Caco-2 (cell line): ENCODE measurements at regions of chr20 and their contacts with region 1.

Region 1: GRCh38 chr20:32582659-32583580 is 2.2 kb downstream of the NOL4L start:
- DNase-seq: peak; percentile 70 to 73
- H3K4me3 ChIP-seq: peak overlapping the region; percentile 70
- H3K4me3 Mint-ChIP-seq: peak overlapping the region; percentile 54
- H3K27ac Mint-ChIP-seq: no peak overlapping the region
- H3K4me1 ChIP-seq: peaks cover 34% of the 10 kb centered on the region
- H3K4me1 Mint-ChIP-seq: peaks cover 18% of the 10 kb centered on the region
- H3K27me3 ChIP-seq: peaks cover 10% of the 10 kb centered on the region
- H3K27me3 Mint-ChIP-seq: peaks cover 24% of the 10 kb centered on the region
- CTCF ChIP-seq: no peak

Region 2: DNA sequence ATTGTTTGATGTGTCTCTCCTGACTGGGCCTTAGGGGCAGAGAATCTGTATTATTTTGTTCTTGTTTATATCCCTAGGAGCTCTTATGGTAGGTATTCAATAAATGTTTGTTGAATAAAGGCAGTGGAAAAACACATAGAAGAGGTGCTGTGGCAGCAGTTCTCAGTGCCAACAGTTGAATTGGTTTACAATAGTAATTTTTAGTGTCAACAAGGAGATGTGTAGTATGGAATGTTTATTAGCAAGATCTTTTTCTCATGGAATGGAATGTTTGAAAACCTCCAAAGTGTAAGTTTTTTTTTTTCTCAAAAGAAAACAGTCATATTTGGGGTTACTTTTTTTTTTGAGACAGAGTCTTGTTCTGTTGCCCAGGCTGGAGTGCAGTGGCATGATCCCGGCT is 196.8 kb before region 1 on chr20:
- CTCF ChIA-PET with region 1: no interaction called
- POLR2A ChIA-PET with region 1: no interaction called
- intact Hi-C with region 1: no loop called
- DNase-seq: no peak
- H3K4me3 ChIP-seq: no peak overlapping the region
- H3K4me3 Mint-ChIP-seq: no peak overlapping the region
- H3K27ac Mint-ChIP-seq: no peak overlapping the region
- H3K4me1 ChIP-seq: peaks cover 4% of the 10 kb centered on the region; the same call in 1 of the 2 replicates
- H3K4me1 Mint-ChIP-seq: peaks cover 10% of the 10 kb centered on the region
- H3K27me3 ChIP-seq: no peaks in the 10 kb centered on the region
- H3K27me3 Mint-ChIP-seq: no peaks in the 10 kb centered on the region
- CTCF ChIP-seq: no peak

Region 3: DNA sequence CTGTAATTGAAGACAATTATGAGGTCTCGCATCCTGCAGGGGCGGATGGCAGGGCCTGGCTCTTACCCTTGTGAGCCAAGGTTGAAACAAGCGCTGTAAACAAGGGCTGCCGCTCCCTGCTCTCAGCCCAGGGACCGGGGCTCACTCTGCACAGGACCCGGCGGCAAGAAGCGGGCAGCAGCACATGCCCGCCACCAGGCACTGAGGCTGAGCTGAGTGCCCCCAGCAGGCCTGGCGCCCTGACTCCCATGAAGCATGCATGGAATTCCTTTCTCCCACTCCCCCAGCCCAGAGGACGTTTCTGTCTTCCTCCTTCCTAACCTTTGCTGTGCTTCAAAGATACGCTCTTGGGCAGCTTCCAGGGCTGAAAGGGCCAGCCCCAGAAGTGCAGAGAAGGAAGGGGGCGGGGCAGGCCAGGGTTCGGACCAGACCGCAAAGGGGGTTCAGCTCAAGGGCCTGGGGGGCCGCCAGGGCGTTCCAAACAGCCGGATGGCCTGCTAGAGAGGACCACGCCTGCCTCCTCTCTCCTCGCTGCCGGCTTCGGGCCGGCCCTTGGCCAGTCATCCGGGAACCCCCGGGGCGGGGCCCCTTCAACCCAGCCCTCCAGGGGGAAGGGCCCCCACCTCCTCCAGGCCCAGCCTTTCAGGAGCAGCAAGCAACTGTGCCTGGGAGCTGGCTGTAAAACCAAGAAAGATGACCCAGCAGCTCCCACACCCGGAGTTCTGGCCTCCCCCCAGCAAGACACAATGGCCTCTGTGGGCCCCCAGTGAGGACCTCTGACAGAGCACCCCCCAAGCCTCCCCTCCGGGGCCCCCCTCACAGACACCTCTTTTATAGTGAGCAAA is 107.7 kb before region 1 on chr20:
- CTCF ChIA-PET with region 1: interaction called, 3 read pairs
- POLR2A ChIA-PET with region 1: no interaction called
- intact Hi-C with region 1: loop called (anchors 5 kb)
- DNase-seq: peak; percentile 99 to 100
- H3K4me3 ChIP-seq: peak overlapping the region; percentile 42
- H3K4me3 Mint-ChIP-seq: peak overlapping the region; percentile 93
- H3K27ac Mint-ChIP-seq: peak overlapping the region; percentile 93
- H3K4me1 ChIP-seq: peaks cover 79% of the 10 kb centered on the region
- H3K4me1 Mint-ChIP-seq: peaks cover 69% of the 10 kb centered on the region
- H3K27me3 ChIP-seq: no peaks in the 10 kb centered on the region
- H3K27me3 Mint-ChIP-seq: no peaks in the 10 kb centered on the region
- CTCF ChIP-seq: peak in 1 of 2 experiments; percentile 18

Region 4: DNA sequence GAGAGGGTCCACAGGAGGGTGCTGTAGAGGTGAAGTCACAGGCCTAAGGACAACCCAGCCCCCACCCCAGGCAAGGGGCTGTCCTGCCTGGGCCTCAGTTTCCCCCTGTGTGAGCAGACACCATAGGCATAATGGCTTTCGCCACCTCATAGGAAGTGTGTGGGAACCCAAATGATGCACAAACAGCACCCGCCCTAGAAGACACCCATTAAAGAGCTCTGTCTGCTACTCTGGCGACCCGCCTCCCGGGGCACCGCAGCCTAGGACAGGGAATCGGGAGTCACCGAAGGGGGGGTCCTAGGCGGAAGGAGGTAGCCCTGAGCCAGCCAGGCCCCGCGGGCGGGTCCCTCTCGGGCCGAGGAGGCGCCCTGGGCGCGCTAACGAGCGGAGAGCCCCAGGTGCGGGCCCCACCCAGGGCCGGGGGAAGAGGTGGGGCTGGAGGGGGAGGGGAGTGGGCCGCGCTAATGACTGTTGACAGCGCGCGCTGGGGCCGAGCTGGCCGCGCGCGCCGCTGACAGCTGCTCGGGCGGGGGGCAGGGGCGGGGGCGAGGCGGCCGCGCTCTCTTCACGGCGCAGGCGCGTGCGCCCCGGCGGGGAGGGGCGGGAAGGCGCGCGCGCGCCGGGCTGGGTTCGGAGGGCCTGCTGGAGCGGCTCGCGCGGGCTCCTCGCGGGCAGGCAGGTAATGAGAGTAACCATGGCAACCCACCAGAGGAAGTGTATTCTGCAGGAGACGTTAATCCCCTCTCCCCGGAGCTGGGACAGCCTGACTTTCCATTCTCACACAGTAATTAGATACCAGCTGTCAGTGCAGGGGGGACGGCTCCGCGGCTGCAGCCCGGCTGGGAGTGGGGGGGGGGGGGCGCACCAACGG is 46.7 kb before region 1 on chr20:
- CTCF ChIA-PET with region 1: interaction called, 3 read pairs
- POLR2A ChIA-PET with region 1: no interaction called
- intact Hi-C with region 1: loop called (anchors 5 kb)
- DNase-seq: peak; percentile 87 to 88
- H3K4me3 ChIP-seq: peak overlapping the region; percentile 71
- H3K4me3 Mint-ChIP-seq: peak overlapping the region; percentile 80
- H3K27ac Mint-ChIP-seq: no peak overlapping the region
- H3K4me1 ChIP-seq: peaks cover 17% of the 10 kb centered on the region
- H3K4me1 Mint-ChIP-seq: peaks cover 19% of the 10 kb centered on the region
- H3K27me3 ChIP-seq: no peaks in the 10 kb centered on the region
- H3K27me3 Mint-ChIP-seq: no peaks in the 10 kb centered on the region
- CTCF ChIP-seq: no peak

Region 5: DNA sequence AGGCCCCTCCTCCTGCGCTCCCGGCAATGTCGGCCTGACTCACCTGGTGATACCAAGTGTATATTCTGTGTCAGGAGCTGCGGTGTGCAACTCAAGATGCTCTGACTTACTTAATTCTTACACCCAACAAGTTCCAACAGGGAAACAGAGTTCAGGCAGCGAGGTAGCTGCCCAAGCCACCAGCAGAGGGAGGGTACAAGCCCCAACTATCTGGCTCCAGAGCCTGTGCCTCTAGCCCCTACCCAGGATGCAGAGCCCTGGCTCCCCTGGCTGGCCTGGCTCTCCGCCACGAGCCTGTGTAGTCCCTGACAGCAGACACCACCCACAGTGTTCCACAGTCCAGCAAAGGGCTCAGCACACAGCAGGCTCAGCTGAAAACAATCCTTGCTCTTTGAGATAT is 55.9 kb after region 1 on chr20:
- CTCF ChIA-PET with region 1: no interaction called
- POLR2A ChIA-PET with region 1: no interaction called
- intact Hi-C with region 1: no loop called
- DNase-seq: peak in 1 of 2 experiments; percentile 51
- H3K4me3 ChIP-seq: no peak overlapping the region
- H3K4me3 Mint-ChIP-seq: no peak overlapping the region
- H3K27ac Mint-ChIP-seq: no peak overlapping the region
- H3K4me1 ChIP-seq: no peaks in the 10 kb centered on the region
- H3K4me1 Mint-ChIP-seq: no peaks in the 10 kb centered on the region
- H3K27me3 ChIP-seq: no peaks in the 10 kb centered on the region
- H3K27me3 Mint-ChIP-seq: peaks cover 2% of the 10 kb centered on the region
- CTCF ChIP-seq: peak in 1 of 2 experiments; percentile 3